B cell (primary cell): ENCODE measurements at regions of chr4 and their contacts with region 1.

Region 1: DNA sequence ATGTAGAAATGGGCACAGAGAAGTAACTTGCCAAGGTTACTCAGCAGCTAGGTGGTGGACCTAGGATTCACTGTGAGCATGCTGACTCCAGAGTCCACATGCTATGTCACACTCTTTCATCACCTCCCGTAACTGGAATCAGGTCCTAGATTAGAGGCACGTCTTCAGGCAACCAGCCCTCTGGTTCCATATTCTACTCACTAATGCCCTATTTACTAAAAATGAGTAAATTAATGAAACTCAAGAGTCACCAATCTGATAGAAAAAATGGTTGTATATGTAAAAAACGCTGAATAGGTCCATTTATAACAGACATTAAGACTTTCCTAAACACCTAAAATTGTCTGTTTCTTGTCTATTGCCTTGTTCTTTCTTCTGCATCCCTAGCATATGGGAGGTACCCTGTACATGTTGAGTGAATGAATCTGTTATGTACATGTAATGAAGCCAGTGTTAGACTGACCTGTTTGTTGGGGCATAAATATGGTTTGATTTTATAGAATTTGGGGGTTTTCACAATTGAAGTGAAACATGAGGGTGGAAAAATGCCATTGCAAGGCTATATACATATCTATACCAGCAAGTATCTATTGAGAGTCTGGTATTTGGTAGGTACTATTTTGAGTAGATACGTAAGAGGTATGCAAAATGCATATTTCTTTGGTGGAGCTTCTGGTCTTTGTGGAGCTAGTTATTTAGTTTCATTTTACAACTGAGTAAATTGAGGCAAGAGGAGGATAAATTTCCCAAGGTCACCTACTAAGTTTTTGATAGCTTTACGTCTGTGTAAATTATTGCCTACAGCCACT is 7.5 kb upstream of the RUFY3 start:
- DNase-seq: peak; percentile 25
- ATAC-seq: peak; percentile 29
- H3K4me3 ChIP-seq: peak overlapping the region in 3 of 5 experiments; percentile 3 to 35 (median 15)
- H3K4me3 Mint-ChIP-seq: peak overlapping the region; percentile 83
- H3K27ac ChIP-seq: peak overlapping the region; percentile 65 to 85
- H3K27ac Mint-ChIP-seq: peak overlapping the region; percentile 93
- H3K4me1 ChIP-seq: peaks cover 45 to 48% of the 10 kb centered on the region in 2 donors
- H3K4me1 Mint-ChIP-seq: peaks cover 54% of the 10 kb centered on the region
- H3K27me3 ChIP-seq: no peaks in the 10 kb centered on the region
- H3K27me3 Mint-ChIP-seq: no peaks in the 10 kb centered on the region
- CTCF ChIP-seq: no peak

Region 2: GRCh38 chr4:70687821-70688794 is 26.2 kb before region 1 on chr4 and contains the start of gene UTP3:
- CTCF ChIA-PET with region 1: interaction called, 10 read pairs
- POLR2A ChIA-PET with region 1: no interaction called
- intact Hi-C with region 1: no loop called
- DNase-seq: peak; percentile 96
- ATAC-seq: peak; percentile 90
- H3K4me3 ChIP-seq: peak within 1 kb of the TSS; percentile 66 to 97 (median 92)
- H3K4me3 Mint-ChIP-seq: peak within 1 kb of the TSS; percentile 100
- H3K27ac ChIP-seq: peak within 1 kb of the TSS; percentile 96 to 98
- H3K27ac Mint-ChIP-seq: peak within 1 kb of the TSS; percentile 100
- H3K4me1 ChIP-seq: peaks cover 24 to 32% of the 10 kb centered on the region in 2 donors
- H3K4me1 Mint-ChIP-seq: peaks cover 37% of the 10 kb centered on the region
- H3K27me3 ChIP-seq: no peaks in the 10 kb centered on the region
- H3K27me3 Mint-ChIP-seq: no peaks in the 10 kb centered on the region
- CTCF ChIP-seq: peak; percentile 98
- total RNA-seq, gene UTP3: 42.0 and 42.2 TPM in 2 replicates